ENCODE measurements at regions of chr12 and their contacts with region 1.

Region 1: DNA sequence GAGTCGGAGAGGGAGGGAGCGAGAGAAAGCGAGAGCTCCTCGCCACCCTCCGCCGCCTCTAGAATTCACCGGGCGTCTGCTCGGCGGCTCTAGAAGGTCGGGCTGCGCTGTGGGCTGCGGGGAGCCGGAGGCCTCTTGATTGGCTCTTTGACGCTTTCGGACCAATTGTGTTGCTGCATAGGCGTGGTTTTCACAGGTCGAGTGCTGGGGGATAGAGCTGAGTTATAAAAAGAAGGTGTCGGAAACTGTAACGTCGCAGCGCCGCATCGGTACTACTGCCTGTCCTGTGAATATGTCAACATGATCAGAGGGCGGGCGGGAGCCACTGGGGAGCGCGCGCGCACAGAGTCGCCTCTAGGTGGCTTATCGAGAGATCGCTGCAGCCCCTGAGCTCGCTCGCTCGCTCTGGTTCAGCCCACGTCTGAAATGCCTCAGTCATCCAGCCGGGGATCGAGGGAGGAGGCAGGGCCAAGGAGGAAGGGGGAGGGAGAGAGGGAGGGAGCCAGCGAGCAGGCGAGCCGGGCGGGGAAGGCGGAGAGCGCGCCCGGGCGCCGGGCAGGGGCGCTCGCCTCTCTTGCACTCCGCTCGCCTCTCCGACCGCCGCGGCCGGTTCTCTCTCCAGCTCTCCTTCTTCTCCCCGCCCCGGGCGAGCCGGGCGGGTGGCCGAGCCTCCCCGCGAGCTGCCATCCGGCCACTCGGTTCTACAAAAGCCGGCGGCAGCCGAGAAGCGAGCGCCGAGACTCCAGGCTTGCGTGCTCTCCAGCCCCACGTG is at the start of gene TBX3:
- DNase-seq: peak; percentile 97
- H3K4me3 ChIP-seq: peak within 1 kb of the TSS; percentile 82
- H3K27ac ChIP-seq: peak within 1 kb of the TSS; percentile 66
- H3K27me3 ChIP-seq: peaks cover 23% of the 10 kb centered on the region
- CTCF ChIP-seq: peak; percentile 71

Region 2: GRCh38 chr12:114895827-114896226 is 211.5 kb after region 1 on chr12:
- in situ Hi-C with region 1: no loop called
- DNase-seq: no peak
- H3K4me3 ChIP-seq: no peak overlapping the region
- H3K27ac ChIP-seq: no peak overlapping the region
- H3K27me3 ChIP-seq: no peaks in the 10 kb centered on the region
- CTCF ChIP-seq: no peak

Region 3: DNA sequence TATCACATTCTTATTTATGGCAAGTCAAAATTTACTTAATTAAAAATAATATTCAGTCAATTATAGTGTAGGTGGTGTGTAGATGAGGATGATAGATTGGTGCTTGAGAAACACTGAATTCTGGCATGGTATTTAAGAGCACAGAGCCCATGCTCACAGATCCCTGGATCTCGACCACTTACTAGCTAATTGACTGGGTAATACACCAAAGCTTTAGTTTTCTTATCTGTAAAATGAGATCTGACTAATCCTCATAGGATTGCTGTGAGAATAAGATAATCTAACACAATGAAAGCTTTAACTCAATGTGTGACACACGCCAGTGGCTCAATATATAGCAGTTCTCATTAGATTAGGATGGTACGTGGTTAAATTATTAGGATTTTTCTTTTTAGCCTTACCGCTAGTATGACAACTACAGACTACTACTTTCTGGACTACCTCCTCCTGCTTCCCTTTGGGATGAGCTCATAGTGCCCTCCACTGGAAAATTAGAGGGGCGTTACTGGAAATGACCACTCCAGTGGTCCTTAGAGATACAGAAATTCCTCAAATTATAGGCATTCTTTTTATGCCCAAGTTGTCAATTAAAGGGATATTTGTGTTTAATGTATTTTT is 482.5 kb after region 1 on chr12:
- in situ Hi-C with region 1: loop called (anchors 25 kb)
- DNase-seq: peak; percentile 22
- H3K4me3 ChIP-seq: no peak overlapping the region
- H3K27ac ChIP-seq: no peak overlapping the region
- H3K27me3 ChIP-seq: no peaks in the 10 kb centered on the region
- CTCF ChIP-seq: peak; percentile 50